Activated CD4-positive, alpha-beta T cell treated with anti-CD3 and anti-CD28 coated beads for 36 hours (primary cell): ENCODE measurements at regions of chr14 and their contacts with region 1.

Region 1: GRCh38 chr14:50773632-50774541 is 57.1 kb downstream of the NIN start:
- DNase-seq: peak; percentile 60
- ATAC-seq: peak; percentile 68
- H3K4me3 Mint-ChIP-seq: no peak overlapping the region
- H3K27ac Mint-ChIP-seq: no peak overlapping the region
- H3K4me1 Mint-ChIP-seq: peaks cover 24% of the 10 kb centered on the region
- H3K27me3 Mint-ChIP-seq: no peaks in the 10 kb centered on the region

Region 2: GRCh38 chr14:50342221-50343078 is 431.4 kb before region 1 on chr14:
- CTCF ChIA-PET with region 1: interaction called, 3 read pairs
- POLR2A ChIA-PET with region 1: no interaction called
- intact Hi-C with region 1: loop called in 1 of 2 experiments (anchors 5 kb)
- DNase-seq: peak; percentile 76
- ATAC-seq: no peak
- H3K4me3 Mint-ChIP-seq: no peak overlapping the region
- H3K27ac Mint-ChIP-seq: no peak overlapping the region
- H3K4me1 Mint-ChIP-seq: peaks cover 30% of the 10 kb centered on the region
- H3K27me3 Mint-ChIP-seq: peaks cover 3% of the 10 kb centered on the region

Region 3: GRCh38 chr14:50599700-50600444 is 174.0 kb before region 1 on chr14:
- CTCF ChIA-PET with region 1: interaction called, 26 read pairs
- POLR2A ChIA-PET with region 1: no interaction called
- intact Hi-C with region 1: loop called (anchors 1 kb)
- DNase-seq: no peak
- ATAC-seq: peak; percentile 42
- H3K4me3 Mint-ChIP-seq: no peak overlapping the region
- H3K27ac Mint-ChIP-seq: no peak overlapping the region
- H3K4me1 Mint-ChIP-seq: no peaks in the 10 kb centered on the region
- H3K27me3 Mint-ChIP-seq: no peaks in the 10 kb centered on the region

Region 4: GRCh38 chr14:50619556-50620141 is 154.2 kb before region 1 on chr14:
- CTCF ChIA-PET with region 1: interaction called, 23 read pairs
- POLR2A ChIA-PET with region 1: no interaction called
- intact Hi-C with region 1: loop called (anchors 1 kb)
- DNase-seq: no peak
- ATAC-seq: peak; percentile 66
- H3K4me3 Mint-ChIP-seq: no peak overlapping the region
- H3K27ac Mint-ChIP-seq: no peak overlapping the region
- H3K4me1 Mint-ChIP-seq: no peaks in the 10 kb centered on the region
- H3K27me3 Mint-ChIP-seq: no peaks in the 10 kb centered on the region

Region 5: GRCh38 chr14:50714450-50715073 is 59.3 kb before region 1 on chr14:
- CTCF ChIA-PET with region 1: interaction called, 14 read pairs
- POLR2A ChIA-PET with region 1: no interaction called
- intact Hi-C with region 1: no loop called
- DNase-seq: no peak
- ATAC-seq: peak; percentile 60
- H3K4me3 Mint-ChIP-seq: no peak overlapping the region
- H3K27ac Mint-ChIP-seq: no peak overlapping the region
- H3K4me1 Mint-ChIP-seq: no peaks in the 10 kb centered on the region
- H3K27me3 Mint-ChIP-seq: peaks cover 6% of the 10 kb centered on the region

Region 6: DNA sequence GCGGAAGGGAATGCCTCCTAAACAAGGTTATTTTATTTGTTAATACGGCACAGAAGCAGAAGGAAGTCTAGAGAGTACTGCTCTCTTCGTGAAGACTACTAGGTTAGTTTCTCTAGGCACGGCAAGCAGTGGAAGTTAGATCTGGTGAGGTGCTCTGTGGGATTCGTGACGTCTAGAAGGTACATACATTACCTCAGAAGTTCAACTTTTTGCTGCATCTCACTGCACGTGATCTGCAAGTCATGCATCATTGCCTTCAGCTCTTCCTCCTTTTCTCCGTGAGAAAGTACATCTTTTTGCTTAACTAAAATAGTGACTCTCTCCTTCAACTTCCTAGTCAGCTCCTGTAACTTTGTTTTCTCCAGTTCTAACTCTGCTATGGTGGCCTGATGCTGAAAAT is 17.6 kb before region 1 on chr14:
- CTCF ChIA-PET with region 1: interaction called, 168 read pairs
- POLR2A ChIA-PET with region 1: no interaction called
- intact Hi-C with region 1: no loop called
- DNase-seq: no peak
- ATAC-seq: no peak
- H3K4me3 Mint-ChIP-seq: no peak overlapping the region
- H3K27ac Mint-ChIP-seq: no peak overlapping the region
- H3K4me1 Mint-ChIP-seq: peaks cover 9% of the 10 kb centered on the region
- H3K27me3 Mint-ChIP-seq: no peaks in the 10 kb centered on the region

Region 7: DNA sequence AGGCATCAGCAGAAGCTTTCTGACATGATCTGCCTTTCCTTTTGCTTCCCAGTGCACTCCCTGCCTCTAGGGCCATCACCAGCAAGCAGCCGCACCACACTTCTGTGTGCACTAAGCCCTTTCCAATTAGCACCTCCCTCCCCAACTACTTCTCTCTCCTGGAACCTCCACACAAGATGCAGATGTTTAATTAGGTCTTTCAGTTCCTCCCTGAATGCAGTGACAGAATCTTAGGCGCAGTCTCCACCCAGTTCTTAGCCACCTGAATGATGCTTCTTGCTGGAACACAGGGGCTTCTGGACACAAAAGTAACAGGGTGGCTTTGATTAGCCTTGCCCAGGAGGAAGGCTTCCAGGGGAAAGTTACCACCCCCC is 24.1 kb after region 1 on chr14:
- CTCF ChIA-PET with region 1: interaction called, 119 read pairs
- POLR2A ChIA-PET with region 1: no interaction called
- intact Hi-C with region 1: no loop called
- DNase-seq: no peak
- ATAC-seq: no peak
- H3K4me3 Mint-ChIP-seq: no peak overlapping the region
- H3K27ac Mint-ChIP-seq: no peak overlapping the region
- H3K4me1 Mint-ChIP-seq: peaks cover 31% of the 10 kb centered on the region
- H3K27me3 Mint-ChIP-seq: no peaks in the 10 kb centered on the region

Region 8: DNA sequence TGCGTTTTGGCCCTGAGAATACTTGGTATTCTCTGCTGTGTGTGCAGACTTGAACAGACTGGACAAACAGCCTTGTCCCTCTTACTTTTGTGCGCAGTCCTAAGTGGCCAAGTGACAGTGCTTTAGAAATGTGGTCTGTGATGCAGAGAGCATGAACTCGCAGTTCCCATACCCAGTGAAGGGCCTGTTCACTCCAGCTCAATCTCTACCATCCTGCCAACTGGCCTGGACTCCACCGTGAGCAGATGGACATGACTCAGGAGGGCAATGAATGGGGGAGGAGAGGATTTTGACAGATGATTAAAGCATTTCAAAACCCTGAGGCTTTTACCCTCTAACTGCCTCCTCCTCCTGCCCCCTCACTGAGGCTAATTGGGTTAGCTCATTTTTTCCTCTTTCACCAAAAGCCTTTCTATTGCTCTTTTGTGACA is 232.9 kb after region 1 on chr14:
- CTCF ChIA-PET with region 1: no interaction called
- POLR2A ChIA-PET with region 1: no interaction called
- intact Hi-C with region 1: no loop called
- DNase-seq: no peak
- ATAC-seq: no peak
- H3K4me3 Mint-ChIP-seq: no peak overlapping the region
- H3K27ac Mint-ChIP-seq: no peak overlapping the region
- H3K4me1 Mint-ChIP-seq: no peaks in the 10 kb centered on the region
- H3K27me3 Mint-ChIP-seq: no peaks in the 10 kb centered on the region